ENCODE measurements at regions of chr13 and their contacts with region 1.

Region 1: DNA sequence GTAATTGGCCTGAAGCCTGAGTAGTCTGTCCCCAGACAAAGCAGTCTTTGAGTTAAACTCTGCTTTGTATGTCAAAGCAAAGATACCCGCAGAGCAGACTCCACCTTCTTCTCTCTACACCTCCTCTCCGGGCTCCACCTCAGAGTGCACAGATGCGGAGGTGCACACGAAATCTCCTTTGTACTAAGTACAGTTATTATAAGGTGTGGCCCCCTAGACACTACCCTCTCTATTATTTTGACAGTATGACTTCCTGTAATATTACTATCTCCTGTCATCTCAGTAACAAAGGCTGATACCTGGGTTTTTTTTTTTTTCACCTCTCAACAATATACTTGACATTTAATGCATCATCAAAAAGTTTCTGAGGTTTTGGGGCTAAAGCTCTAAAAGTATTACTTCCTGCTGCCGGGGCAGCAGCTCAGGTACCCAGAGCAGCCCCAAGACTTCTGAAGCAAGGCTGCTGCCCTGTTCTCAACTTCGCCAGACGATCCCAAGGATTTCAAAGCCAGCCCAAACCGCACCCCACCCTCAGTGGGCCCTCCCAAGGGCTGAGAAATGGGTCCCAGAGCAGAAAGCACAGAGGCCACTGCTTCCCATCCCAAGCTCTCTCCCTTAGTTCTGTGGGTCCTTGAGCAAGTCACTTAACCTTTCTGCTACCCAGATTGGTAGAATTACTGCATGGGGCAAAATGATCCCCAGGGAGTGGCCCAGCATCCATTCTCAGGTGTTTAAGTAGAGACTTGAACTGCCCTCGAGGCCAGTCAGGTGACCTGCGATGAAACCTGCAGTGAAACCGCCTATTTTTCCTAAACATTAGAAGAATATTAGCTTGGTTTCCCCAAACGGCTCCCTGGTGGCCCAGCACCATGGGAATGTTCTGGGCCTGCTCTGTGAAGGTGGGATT is 180.6 kb downstream of the FOXO1 start:
- DNase-seq: peak; percentile 86
- H3K4me3 Mint-ChIP-seq: peak overlapping the region; percentile 8
- H3K27ac Mint-ChIP-seq: peak overlapping the region; percentile 83
- H3K4me1 Mint-ChIP-seq: peaks cover 82% of the 10 kb centered on the region
- H3K27me3 Mint-ChIP-seq: no peaks in the 10 kb centered on the region

Region 2: DNA sequence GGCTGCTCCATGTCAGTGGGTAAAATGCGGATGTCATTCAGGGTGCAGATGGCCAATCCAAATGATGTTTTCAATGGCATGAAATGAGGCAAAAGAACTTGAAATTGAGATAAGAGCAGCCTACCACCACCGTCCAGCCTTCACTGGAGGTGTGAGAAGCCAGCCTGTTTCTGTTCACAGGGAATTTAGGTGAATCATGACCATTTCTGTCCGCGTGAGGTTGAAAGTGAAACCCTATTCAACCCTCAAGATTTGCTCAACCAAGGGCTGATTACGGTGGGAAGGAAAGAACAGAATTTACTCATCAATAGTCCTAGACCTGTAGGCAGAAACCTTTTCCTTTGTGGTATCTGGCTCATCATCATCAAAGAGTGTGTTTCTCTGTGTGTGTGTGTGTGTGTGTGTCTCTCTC is 459.7 kb before region 1 on chr13:
- CTCF ChIA-PET with region 1: no interaction called
- intact Hi-C with region 1: loop called (anchors 1 kb)
- DNase-seq: peak; percentile 82
- H3K4me3 Mint-ChIP-seq: no peak overlapping the region
- H3K27ac Mint-ChIP-seq: no peak overlapping the region
- H3K4me1 Mint-ChIP-seq: peaks cover 33% of the 10 kb centered on the region
- H3K27me3 Mint-ChIP-seq: peaks cover 2% of the 10 kb centered on the region

Region 3: DNA sequence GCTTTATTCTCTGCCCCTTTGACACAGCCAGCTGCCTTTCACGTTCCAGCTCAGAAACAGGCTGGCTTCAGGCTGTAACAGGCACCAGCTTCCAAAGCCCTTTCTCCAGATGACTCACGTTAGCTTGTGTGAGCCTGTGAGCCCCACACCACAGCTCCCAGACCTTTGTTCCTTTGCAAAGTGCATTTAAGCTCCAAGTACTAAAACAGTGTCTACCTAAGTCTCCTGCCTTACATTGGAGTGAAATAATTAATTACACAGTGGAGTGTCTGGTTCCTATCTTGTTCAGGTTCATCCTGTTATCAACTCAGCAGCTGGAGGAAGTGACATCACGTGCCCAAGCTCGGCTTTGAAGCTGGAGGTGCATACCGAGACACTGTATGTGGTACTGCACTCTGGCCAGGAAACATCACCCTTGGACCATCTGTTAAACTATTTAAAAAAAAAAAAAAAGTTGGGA is 295.2 kb before region 1 on chr13:
- CTCF ChIA-PET with region 1: no interaction called
- intact Hi-C with region 1: loop called (anchors 2 kb)
- DNase-seq: peak; percentile 91
- H3K4me3 Mint-ChIP-seq: peak overlapping the region; percentile 36
- H3K27ac Mint-ChIP-seq: peak overlapping the region; percentile 81
- H3K4me1 Mint-ChIP-seq: peaks cover 69% of the 10 kb centered on the region
- H3K27me3 Mint-ChIP-seq: no peaks in the 10 kb centered on the region

Region 4: GRCh38 chr13:40251343-40252032 is 234.4 kb before region 1 on chr13:
- CTCF ChIA-PET with region 1: no interaction called
- intact Hi-C with region 1: loop called (anchors 2 kb)
- DNase-seq: peak; percentile 28
- H3K4me3 Mint-ChIP-seq: no peak overlapping the region
- H3K27ac Mint-ChIP-seq: peak overlapping the region; percentile 88
- H3K4me1 Mint-ChIP-seq: peaks cover 52% of the 10 kb centered on the region
- H3K27me3 Mint-ChIP-seq: no peaks in the 10 kb centered on the region

Region 5: DNA sequence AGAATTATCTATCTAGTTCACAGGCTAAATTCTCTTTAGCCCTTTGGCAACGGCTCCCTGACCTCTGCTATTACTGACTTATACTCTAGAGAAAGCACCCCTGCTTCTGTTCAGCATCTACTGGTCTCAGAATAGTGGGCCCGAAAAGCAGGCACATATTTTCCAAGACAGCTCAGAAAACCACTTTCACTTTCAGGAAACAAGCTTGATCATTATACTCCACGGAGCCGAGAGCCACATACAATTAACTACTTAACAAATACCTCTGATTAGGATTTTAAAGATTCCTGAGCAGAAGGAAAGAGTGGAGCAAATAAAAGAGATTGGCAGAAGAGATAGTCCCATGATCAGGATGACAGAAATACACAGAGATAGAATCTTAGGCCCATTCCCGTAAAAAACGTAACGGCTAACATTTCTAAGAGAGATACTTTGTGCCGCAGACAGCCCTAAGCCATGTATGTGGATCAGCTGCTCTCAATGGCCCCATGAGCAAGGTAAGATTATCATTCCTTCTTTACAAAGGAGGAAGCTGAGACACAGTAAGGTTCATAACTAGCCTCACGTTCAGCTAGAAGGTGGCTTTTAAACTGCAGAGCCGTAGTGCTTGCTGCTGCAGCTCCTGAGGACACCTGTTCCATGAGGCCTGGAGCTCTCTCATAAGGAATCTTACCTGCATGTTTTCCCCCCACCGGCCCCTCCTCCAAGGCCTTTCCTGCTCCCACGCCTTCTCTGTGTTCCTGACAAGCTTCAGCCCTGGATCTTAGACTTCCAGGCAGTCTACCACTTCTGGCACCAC is 46.7 kb before region 1 on chr13:
- CTCF ChIA-PET with region 1: no interaction called
- intact Hi-C with region 1: loop called (anchors 1 kb)
- DNase-seq: peak; percentile 54
- H3K4me3 Mint-ChIP-seq: peak overlapping the region; percentile 33
- H3K27ac Mint-ChIP-seq: peak overlapping the region; percentile 46
- H3K4me1 Mint-ChIP-seq: peaks cover 40% of the 10 kb centered on the region
- H3K27me3 Mint-ChIP-seq: no peaks in the 10 kb centered on the region

Region 6: GRCh38 chr13:40470660-40471059 is 15.2 kb before region 1 on chr13:
- CTCF ChIA-PET with region 1: no interaction called
- intact Hi-C with region 1: no loop called
- DNase-seq: no peak
- H3K4me3 Mint-ChIP-seq: no peak overlapping the region
- H3K27ac Mint-ChIP-seq: no peak overlapping the region
- H3K4me1 Mint-ChIP-seq: peaks cover 1% of the 10 kb centered on the region
- H3K27me3 Mint-ChIP-seq: no peaks in the 10 kb centered on the region

Region 7: DNA sequence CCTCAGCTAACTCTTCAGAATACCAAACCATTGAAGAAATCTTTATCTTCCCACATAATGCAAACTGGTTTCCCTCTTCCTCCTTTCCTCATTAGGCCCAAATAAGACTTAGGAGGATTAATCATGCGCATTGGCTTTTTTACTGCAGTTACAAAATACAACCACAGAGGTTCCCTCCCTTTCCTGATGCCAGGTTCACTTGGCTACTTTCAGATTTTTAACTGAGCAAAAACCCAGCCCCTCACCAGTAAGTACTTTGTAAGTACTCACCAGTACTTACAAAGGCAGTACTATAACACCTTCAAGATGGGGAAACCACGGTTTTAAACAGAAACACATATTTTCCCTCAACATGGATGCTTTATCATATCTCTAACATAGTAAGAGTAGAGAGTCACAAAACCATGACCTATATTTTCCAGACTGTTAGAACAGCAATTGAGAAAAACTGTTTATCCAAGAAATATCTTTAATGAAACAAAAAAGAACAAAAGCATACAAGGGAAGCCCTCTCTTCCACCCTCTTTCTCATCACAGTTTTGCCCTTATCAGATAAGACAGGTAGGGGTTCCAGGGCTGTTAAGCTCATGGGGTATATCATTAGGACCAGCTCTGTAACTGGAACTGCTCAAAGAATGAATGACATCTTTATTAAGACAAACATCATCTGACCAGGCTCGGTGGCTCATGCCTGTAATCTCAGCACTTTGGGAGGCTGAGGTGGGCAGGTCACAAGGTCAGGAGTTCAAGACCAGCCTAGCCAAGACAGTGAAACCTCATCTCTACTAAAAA is 167.9 kb after region 1 on chr13:
- CTCF ChIA-PET with region 1: no interaction called
- intact Hi-C with region 1: loop called (anchors 2 kb)
- DNase-seq: no peak
- H3K4me3 Mint-ChIP-seq: peak overlapping the region; percentile 58
- H3K27ac Mint-ChIP-seq: peak overlapping the region; percentile 95
- H3K4me1 Mint-ChIP-seq: peaks cover 94% of the 10 kb centered on the region
- H3K27me3 Mint-ChIP-seq: no peaks in the 10 kb centered on the region